ENCODE measurements at regions of chr2 and their contacts with region 1.

Region 1: DNA sequence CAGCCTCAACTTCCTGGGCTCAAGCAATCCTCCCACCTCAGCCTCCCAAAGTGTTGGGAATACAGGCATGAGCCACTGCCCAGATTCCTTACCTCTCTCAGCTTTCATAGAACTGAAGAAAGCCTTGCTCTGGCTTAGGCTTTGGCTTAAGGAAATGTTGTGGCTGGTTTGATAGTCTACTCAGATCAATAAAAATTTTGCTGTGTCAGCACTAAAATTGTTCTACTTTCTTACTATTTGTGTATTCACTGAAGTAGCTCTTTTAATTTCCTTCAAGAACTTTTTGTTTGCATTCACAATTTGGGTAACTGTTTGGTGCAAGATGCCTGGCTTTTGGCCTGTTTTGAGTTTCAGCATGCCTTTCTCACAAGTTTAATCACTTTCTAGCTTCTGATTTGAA is 634.0 kb upstream of the FSHR start:
- DNase-seq: no peak
- ATAC-seq: no peak
- H3K4me3 ChIP-seq: no peak overlapping the region
- H3K27ac ChIP-seq: no peak overlapping the region
- H3K4me1 ChIP-seq: no peaks in the 10 kb centered on the region
- H3K27me3 ChIP-seq: no peaks in the 10 kb centered on the region
- CTCF ChIP-seq: no peak
- POLR2A ChIP-seq: no peak
- RAD21 ChIP-seq: no peak

Region 2: DNA sequence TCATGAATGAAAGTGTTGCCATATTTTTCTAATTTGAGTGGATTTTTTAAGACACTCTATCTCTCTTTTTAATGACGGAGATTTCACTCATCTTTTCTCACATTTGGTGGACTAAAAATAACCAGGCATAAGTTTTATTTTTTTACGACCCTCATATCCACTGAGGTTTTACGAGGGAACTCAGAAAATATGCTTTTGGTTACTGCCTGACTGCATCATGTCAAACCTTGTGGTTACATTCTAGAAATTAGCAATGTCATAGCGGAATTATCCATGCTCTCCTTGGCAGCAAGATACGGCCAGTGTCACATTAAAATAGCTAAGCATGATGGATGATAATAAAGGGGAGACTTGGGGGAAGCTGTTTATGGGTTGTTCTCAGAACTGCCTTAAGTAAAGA is 205.4 kb before region 1 on chr2:
- CTCF ChIA-PET with region 1: no interaction called
- POLR2A ChIA-PET with region 1: no interaction called
- dilution Hi-C with region 1: no loop called
- in situ Hi-C with region 1: no loop called
- intact Hi-C with region 1: no loop called
- DNase-seq: no peak
- ATAC-seq: no peak
- H3K4me3 ChIP-seq: no peak overlapping the region
- H3K27ac ChIP-seq: no peak overlapping the region
- H3K4me1 ChIP-seq: no peaks in the 10 kb centered on the region
- H3K27me3 ChIP-seq: no peaks in the 10 kb centered on the region
- CTCF ChIP-seq: no peak
- POLR2A ChIP-seq: no peak
- RAD21 ChIP-seq: no peak

Region 3: GRCh38 chr2:49837561-49838293 is 49.4 kb after region 1 on chr2:
- CTCF ChIA-PET with region 1: no interaction called
- POLR2A ChIA-PET with region 1: no interaction called
- dilution Hi-C with region 1: no loop called
- in situ Hi-C with region 1: no loop called
- intact Hi-C with region 1: loop called (anchors 2 kb)
- DNase-seq: no peak
- ATAC-seq: no peak
- H3K4me3 ChIP-seq: no peak overlapping the region
- H3K27ac ChIP-seq: no peak overlapping the region
- H3K4me1 ChIP-seq: no peaks in the 10 kb centered on the region
- H3K27me3 ChIP-seq: no peaks in the 10 kb centered on the region
- CTCF ChIP-seq: no peak
- POLR2A ChIP-seq: no peak
- RAD21 ChIP-seq: no peak

Region 4: DNA sequence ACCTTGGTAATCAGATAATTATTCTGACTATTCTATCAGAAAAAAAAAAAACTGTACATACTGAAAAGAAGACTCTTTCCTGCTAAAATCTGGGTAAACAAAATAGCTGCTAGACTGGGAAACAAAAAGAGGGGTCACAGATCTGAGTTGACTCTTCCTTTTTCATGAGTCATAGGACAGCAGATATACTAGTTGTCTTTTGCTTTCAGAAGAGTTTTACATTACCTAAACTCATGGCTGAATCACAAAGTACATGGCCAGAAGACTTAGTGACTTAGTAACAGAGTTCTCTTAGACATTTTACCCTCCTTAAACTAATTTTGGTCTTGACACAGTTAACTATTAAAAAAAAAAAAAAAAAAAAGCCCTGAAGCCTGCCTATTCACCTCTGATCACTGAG is 200.0 kb after region 1 on chr2:
- CTCF ChIA-PET with region 1: no interaction called
- POLR2A ChIA-PET with region 1: no interaction called
- dilution Hi-C with region 1: no loop called
- in situ Hi-C with region 1: no loop called
- intact Hi-C with region 1: no loop called
- DNase-seq: no peak
- ATAC-seq: no peak
- H3K4me3 ChIP-seq: no peak overlapping the region
- H3K27ac ChIP-seq: no peak overlapping the region
- H3K4me1 ChIP-seq: no peaks in the 10 kb centered on the region
- H3K27me3 ChIP-seq: no peaks in the 10 kb centered on the region
- CTCF ChIP-seq: no peak
- POLR2A ChIP-seq: no peak
- RAD21 ChIP-seq: no peak